Panc1 (cell line): ENCODE measurements at regions of chr2 and their contacts with region 1.

Region 1: GRCh38 chr2:237413777-237414661 is at the start of gene COL6A3:
- DNase-seq: no peak
- ATAC-seq: no peak
- H3K4me3 ChIP-seq: no peak within 1 kb of the TSS
- H3K27ac ChIP-seq: no peak within 1 kb of the TSS
- H3K4me1 ChIP-seq: 0 out of 2 replicates have a peak, but pooled peaks cover 4% of the 10 kb centered on the region
- H3K27me3 ChIP-seq: no peaks in the 10 kb centered on the region
- CTCF ChIP-seq: no peak
- total RNA-seq, gene COL6A3: 0.69 TPM

Region 2: DNA sequence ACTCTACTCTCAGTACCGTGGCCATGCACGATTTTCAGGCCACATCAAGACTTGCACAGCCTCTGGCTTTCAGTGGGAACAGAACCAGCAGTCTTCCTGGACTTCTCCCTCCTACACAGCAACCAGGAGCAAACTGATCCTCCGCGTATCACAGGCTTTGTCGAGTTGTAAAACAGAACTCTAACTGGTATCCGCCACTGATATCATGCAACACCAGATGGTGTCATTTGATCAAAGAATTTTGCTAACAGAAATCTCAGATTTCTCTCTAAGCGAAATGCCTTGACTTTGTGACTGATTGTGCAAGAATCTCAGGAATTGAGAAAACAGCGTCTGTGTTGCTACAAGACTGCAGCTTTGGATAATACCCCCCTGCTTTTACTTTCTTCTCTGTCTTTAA is 242.6 kb before region 1 on chr2:
- CTCF ChIA-PET with region 1: no interaction called
- POLR2A ChIA-PET with region 1: no interaction called
- in situ Hi-C with region 1: no loop called
- intact Hi-C with region 1: loop called (anchors 5 kb)
- DNase-seq: peak; percentile 50
- ATAC-seq: peak; percentile 93
- H3K4me3 ChIP-seq: peak overlapping the region; percentile 10 to 19; a peak in 3 of 4 replicates
- H3K27ac ChIP-seq: peak overlapping the region; percentile 89
- H3K4me1 ChIP-seq: peaks cover 10% of the 10 kb centered on the region
- H3K27me3 ChIP-seq: no peaks in the 10 kb centered on the region
- CTCF ChIP-seq: peak; percentile 25; the same call in 1 of the 2 replicates

Region 3: DNA sequence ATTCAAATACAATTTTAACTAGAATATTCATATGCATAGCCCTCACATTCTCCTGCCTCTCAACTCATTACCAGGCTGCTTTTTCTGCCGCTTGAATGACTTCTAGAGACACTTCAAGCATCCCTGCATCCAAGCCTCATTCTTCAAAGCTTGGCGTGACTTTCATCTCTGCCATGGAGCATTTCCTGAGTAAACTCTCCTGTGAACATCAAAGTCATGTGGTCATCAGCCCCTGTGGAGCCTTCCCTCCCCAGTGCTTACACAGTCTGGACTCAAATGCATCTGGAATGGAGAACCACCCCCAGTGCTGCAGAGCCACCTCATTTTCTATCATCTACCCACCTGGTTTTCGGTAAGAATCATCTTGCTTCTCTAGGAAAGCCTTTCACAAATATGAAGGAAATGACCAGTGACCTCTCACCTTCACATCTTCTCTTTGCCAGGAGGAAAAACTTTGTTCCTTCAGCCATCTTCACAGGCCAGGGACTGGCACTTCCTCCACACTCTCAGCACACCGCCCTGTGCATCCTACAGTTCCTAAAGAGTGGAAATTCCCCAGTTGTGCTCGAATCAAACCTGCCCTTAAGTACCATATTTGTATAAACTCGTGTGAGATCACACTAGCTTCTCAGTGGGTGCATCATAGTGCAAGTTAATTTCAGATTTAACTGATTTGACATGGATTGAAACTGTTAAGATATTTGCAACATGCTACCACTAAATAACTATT is 116.4 kb before region 1 on chr2:
- CTCF ChIA-PET with region 1: interaction called, 15 read pairs
- POLR2A ChIA-PET with region 1: no interaction called
- in situ Hi-C with region 1: no loop called
- intact Hi-C with region 1: no loop called
- DNase-seq: no peak
- ATAC-seq: peak; percentile 60
- H3K4me3 ChIP-seq: no peak overlapping the region
- H3K27ac ChIP-seq: peak overlapping the region; percentile 67
- H3K4me1 ChIP-seq: peaks cover 6% of the 10 kb centered on the region; the same call in 1 of the 2 replicates
- H3K27me3 ChIP-seq: no peaks in the 10 kb centered on the region
- CTCF ChIP-seq: no peak